WTC11 (cell line): ENCODE measurements at regions of chr21 and their contacts with region 1.

Region 1: GRCh38 chr21:42309753-42310221 is 5.4 kb downstream of the TFF3 start:
- DNase-seq: peak; percentile 85
- ATAC-seq: peak; percentile 83
- H3K4me3 Mint-ChIP-seq: peak overlapping the region; percentile 55
- H3K27ac Mint-ChIP-seq: no peak overlapping the region
- H3K4me1 Mint-ChIP-seq: peaks cover 32% of the 10 kb centered on the region
- H3K27me3 Mint-ChIP-seq: peaks cover 6% of the 10 kb centered on the region
- CTCF ChIP-seq: peak; percentile 90

Region 2: DNA sequence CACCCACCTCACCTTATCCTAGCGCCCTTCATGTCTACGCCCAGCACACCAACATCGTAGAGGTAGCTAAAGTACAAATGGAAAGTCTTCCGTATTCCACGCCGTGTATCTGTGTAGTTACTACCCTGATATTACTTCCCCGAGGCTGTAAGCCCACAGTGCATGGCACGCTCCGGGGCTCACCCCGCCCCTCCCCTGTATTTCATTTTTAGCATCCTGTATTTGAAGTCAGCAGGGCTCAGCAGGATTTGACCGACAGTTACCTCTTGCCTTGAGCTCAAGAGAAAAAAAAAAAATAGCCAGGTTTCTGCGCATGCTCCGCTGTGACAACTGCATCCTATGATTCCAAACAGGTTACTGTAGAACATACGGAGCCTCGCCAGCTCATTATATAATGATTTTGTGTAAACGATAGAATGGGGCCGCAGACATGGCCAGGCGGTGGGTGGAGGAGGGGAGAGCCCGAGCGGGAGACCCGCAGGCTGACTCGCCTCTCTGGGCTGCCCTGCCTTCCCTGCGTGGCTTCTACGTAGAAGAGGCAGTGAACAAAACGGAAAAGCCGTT is 89.6 kb before region 1 on chr21:
- CTCF ChIA-PET with region 1: interaction called, 11 read pairs
- POLR2A ChIA-PET with region 1: no interaction called
- DNase-seq: no peak
- ATAC-seq: peak; percentile 18
- H3K4me3 Mint-ChIP-seq: peak overlapping the region; percentile 87
- H3K27ac Mint-ChIP-seq: no peak overlapping the region
- H3K4me1 Mint-ChIP-seq: peaks cover 7% of the 10 kb centered on the region
- H3K27me3 Mint-ChIP-seq: peaks cover 57% of the 10 kb centered on the region
- CTCF ChIP-seq: no peak

Region 3: GRCh38 chr21:42286416-42286815 is 23.4 kb before region 1 on chr21:
- CTCF ChIA-PET with region 1: interaction called, 17 read pairs
- POLR2A ChIA-PET with region 1: no interaction called
- DNase-seq: no peak
- ATAC-seq: no peak
- H3K4me3 Mint-ChIP-seq: no peak overlapping the region
- H3K27ac Mint-ChIP-seq: no peak overlapping the region
- H3K4me1 Mint-ChIP-seq: no peaks in the 10 kb centered on the region
- H3K27me3 Mint-ChIP-seq: no peaks in the 10 kb centered on the region
- CTCF ChIP-seq: no peak

Region 4: DNA sequence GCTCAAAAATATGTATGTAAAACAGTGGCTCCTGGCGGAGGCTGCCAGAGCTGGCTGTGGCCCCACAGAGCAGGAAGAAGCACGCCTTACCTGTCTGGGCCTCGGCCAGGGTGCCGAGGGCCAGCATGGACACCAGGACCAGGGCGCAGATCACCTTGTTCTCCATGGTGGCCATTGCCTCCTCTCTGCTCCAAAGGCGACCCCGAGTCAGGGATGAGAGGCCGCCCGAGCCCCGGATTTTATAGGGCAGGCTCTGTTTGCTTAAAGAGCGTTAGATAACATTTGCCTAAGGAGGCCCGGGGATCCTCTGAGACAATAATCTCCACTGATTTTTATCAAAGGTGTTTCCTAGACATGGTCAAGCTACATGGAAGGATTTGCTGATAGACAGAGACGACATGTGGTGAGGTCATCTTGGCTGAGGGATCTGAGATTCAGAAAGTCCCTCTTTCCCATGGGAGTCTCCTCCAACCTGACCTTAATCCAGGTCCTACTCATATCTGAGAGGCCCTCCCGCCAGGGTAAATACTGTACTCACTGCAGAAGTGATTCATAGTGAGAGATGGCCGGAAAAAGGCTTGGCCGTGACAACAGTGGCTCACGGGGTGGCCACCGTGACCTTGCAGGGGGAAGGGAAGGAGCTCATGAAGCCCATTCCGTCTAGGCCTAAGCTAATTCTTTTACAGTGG is 56.7 kb after region 1 on chr21 and contains the start of gene TFF1:
- CTCF ChIA-PET with region 1: interaction called, 19 read pairs
- POLR2A ChIA-PET with region 1: no interaction called
- DNase-seq: no peak
- ATAC-seq: no peak
- H3K4me3 Mint-ChIP-seq: no peak within 1 kb of the TSS
- H3K27ac Mint-ChIP-seq: no peak within 1 kb of the TSS
- H3K4me1 Mint-ChIP-seq: peaks cover 2% of the 10 kb centered on the region; the same call in 1 of the 2 replicates
- H3K27me3 Mint-ChIP-seq: no peaks in the 10 kb centered on the region
- CTCF ChIP-seq: no peak
- total RNA-seq, gene TFF1: 0.53 to 0.98 TPM (median 0.81 TPM) in 3 replicates

Region 5: DNA sequence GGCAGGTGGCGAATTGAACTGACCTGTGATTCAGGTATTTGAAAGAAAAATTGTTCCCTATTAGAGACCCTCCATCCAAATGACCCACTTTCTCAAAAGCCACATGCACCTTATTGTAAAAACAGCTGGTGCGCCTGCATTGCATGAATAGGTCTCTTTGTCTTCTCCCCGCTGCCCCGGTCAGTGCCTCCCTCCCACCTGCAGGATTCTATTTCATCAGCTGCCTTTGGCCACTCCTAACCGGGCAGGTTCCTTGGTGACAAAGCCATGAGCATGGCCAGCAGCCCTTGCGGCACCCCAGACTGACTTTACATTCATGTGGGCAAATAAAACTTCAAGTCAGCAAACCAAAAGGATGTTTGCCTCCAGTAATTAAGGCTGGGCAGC is 79.7 kb after region 1 on chr21:
- CTCF ChIA-PET with region 1: interaction called, 20 read pairs
- POLR2A ChIA-PET with region 1: no interaction called
- DNase-seq: peak; percentile 38
- ATAC-seq: peak; percentile 61
- H3K4me3 Mint-ChIP-seq: no peak overlapping the region
- H3K27ac Mint-ChIP-seq: peak overlapping the region; percentile 74
- H3K4me1 Mint-ChIP-seq: peaks cover 31% of the 10 kb centered on the region
- H3K27me3 Mint-ChIP-seq: peaks cover 8% of the 10 kb centered on the region; the same call in 1 of the 2 replicates
- CTCF ChIP-seq: no peak

Region 6: DNA sequence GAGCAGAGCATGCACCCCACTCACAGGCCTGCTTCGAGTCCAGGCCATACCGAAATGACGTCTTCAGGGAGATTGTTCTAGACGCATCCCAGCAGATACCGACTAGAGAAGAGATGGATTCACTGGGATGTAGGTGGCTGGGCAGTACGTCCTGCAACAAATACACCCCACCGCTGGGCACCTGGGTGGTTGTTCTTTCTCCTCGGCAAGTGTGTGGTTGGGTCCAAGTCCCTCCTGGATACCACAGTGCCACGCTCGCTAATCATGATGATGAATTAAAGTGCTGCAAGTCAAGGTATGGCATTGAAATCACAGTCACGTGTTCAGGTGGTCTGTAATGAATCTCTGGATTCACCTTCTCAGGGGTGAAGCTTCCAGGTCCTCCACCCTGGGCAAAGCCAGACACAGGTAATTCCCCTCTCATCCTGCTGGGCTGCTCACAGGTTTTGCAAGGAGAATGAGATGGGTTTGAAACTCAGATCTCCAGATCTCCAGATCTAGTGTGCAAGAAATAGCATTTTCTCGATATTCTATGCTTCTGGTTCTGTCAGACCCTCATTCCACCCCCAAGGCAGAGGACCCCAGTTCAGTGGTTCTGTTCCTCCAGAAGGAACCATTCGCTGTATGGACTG is 139.6 kb after region 1 on chr21:
- CTCF ChIA-PET with region 1: interaction called, 22 read pairs
- POLR2A ChIA-PET with region 1: no interaction called
- DNase-seq: no peak
- ATAC-seq: peak; percentile 4; the same call in 1 of the 2 replicates
- H3K4me3 Mint-ChIP-seq: no peak overlapping the region
- H3K27ac Mint-ChIP-seq: no peak overlapping the region; the same call in 1 of the 2 replicates
- H3K4me1 Mint-ChIP-seq: peaks cover 18% of the 10 kb centered on the region
- H3K27me3 Mint-ChIP-seq: no peaks in the 10 kb centered on the region; the same call in 1 of the 2 replicates
- CTCF ChIP-seq: no peak